ENCODE measurements at regions of chr2 and their contacts with region 1.

Region 1: GRCh38 chr2:88055371-88056128 is at the start of gene KRCC1:
- DNase-seq: peak; percentile 94
- ATAC-seq: peak; percentile 90
- H3K4me3 Mint-ChIP-seq: peak within 1 kb of the TSS; percentile 95
- H3K27ac Mint-ChIP-seq: peak within 1 kb of the TSS; percentile 98
- H3K4me1 Mint-ChIP-seq: peaks cover 66% of the 10 kb centered on the region
- H3K27me3 Mint-ChIP-seq: no peaks in the 10 kb centered on the region
- CTCF ChIP-seq: no peak
- total RNA-seq, gene KRCC1: 10.8 to 11.1 TPM

Region 2: GRCh38 chr2:88016086-88016959 is 39.2 kb before region 1 on chr2 and contains the start of gene RNU2-63P:
- CTCF ChIA-PET with region 1: interaction called, 6 read pairs
- POLR2A ChIA-PET with region 1: interaction called, 21 read pairs
- intact Hi-C with region 1: loop called (anchors 5 kb)
- DNase-seq: peak; percentile 81
- ATAC-seq: peak; percentile 89
- H3K4me3 Mint-ChIP-seq: peak within 1 kb of the TSS; percentile 98
- H3K27ac Mint-ChIP-seq: peak within 1 kb of the TSS; percentile 100
- H3K4me1 Mint-ChIP-seq: peaks cover 16% of the 10 kb centered on the region
- H3K27me3 Mint-ChIP-seq: peaks cover 2% of the 10 kb centered on the region
- CTCF ChIP-seq: no peak
- total RNA-seq, gene RNU2-63P: 6.0 to 7.6 TPM

Region 3: GRCh38 chr2:88074854-88075292 is 19.3 kb after region 1 on chr2:
- CTCF ChIA-PET with region 1: interaction called, 19 read pairs
- POLR2A ChIA-PET with region 1: no interaction called
- intact Hi-C with region 1: no loop called
- DNase-seq: no peak
- ATAC-seq: no peak
- H3K4me3 Mint-ChIP-seq: no peak overlapping the region
- H3K27ac Mint-ChIP-seq: no peak overlapping the region
- H3K4me1 Mint-ChIP-seq: no peaks in the 10 kb centered on the region
- H3K27me3 Mint-ChIP-seq: no peaks in the 10 kb centered on the region
- CTCF ChIP-seq: no peak

Region 4: GRCh38 chr2:88131201-88131998 is 75.8 kb after region 1 on chr2:
- CTCF ChIA-PET with region 1: interaction called, 10 read pairs
- POLR2A ChIA-PET with region 1: no interaction called
- intact Hi-C with region 1: no loop called
- DNase-seq: no peak
- ATAC-seq: no peak
- H3K4me3 Mint-ChIP-seq: no peak overlapping the region
- H3K27ac Mint-ChIP-seq: no peak overlapping the region
- H3K4me1 Mint-ChIP-seq: no peaks in the 10 kb centered on the region
- H3K27me3 Mint-ChIP-seq: peaks cover 6% of the 10 kb centered on the region
- CTCF ChIP-seq: no peak

Region 5: DNA sequence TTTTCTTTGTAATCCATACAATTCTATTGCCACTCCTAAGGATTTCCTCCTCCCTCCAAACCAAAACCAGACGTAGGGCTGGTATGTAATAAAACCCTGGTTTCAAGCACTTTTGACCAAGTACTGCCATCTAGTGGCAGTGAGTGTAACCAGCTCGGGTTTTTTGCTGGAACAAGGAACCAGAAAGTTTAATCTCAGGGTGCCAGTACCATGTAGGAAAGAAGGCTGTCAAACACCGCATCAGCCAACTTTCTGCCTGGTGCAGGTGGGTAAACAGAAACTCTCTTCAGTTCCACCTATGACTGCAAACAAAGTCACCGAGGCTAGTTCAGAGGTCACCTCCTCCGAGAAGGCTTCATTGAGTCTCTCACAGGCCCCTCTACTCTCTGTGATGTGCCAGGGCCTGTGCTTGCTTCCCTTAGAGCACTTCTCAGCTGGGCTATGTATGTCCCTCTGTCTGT is 104.4 kb after region 1 on chr2:
- CTCF ChIA-PET with region 1: interaction called, 193 read pairs
- POLR2A ChIA-PET with region 1: interaction called, 5 read pairs
- intact Hi-C with region 1: loop called (anchors 1 kb)
- DNase-seq: peak; percentile 62
- ATAC-seq: peak; percentile 74
- H3K4me3 Mint-ChIP-seq: no peak overlapping the region
- H3K27ac Mint-ChIP-seq: no peak overlapping the region
- H3K4me1 Mint-ChIP-seq: no peaks in the 10 kb centered on the region
- H3K27me3 Mint-ChIP-seq: no peaks in the 10 kb centered on the region
- CTCF ChIP-seq: peak; percentile 77

Region 6: DNA sequence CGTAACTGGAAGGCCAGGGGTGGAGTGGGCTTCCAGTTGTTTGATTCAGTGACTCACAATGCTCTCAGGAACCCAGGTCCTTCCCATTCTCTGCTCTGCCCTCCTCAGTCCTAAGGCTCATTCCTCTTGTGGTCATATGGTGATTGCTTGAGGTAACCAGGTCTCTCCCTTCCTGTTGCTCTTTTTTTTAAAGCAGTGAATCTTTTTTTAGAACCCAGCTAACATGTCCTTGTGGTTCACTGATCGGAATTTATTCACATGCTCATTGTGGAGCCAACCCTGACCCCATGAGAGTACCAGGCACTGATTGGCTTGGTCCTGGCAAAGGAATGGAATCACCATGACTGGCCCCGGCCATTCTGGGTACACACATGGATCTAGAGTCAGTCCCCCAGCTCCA is 122.0 kb after region 1 on chr2:
- CTCF ChIA-PET with region 1: interaction called, 17 read pairs
- POLR2A ChIA-PET with region 1: no interaction called
- intact Hi-C with region 1: no loop called
- DNase-seq: no peak
- ATAC-seq: no peak
- H3K4me3 Mint-ChIP-seq: no peak overlapping the region
- H3K27ac Mint-ChIP-seq: no peak overlapping the region
- H3K4me1 Mint-ChIP-seq: peaks cover 9% of the 10 kb centered on the region
- H3K27me3 Mint-ChIP-seq: peaks cover 8% of the 10 kb centered on the region
- CTCF ChIP-seq: no peak

Region 7: GRCh38 chr2:88451811-88452565 is 396.4 kb after region 1 on chr2:
- CTCF ChIA-PET with region 1: interaction called, 12 read pairs
- POLR2A ChIA-PET with region 1: no interaction called
- intact Hi-C with region 1: no loop called
- DNase-seq: peak; percentile 21
- ATAC-seq: peak; percentile 48
- H3K4me3 Mint-ChIP-seq: peak overlapping the region; percentile 38
- H3K27ac Mint-ChIP-seq: no peak overlapping the region
- H3K4me1 Mint-ChIP-seq: peaks cover 4% of the 10 kb centered on the region
- H3K27me3 Mint-ChIP-seq: peaks cover 50% of the 10 kb centered on the region
- CTCF ChIP-seq: no peak

Region 8: GRCh38 chr2:88469202-88470114 is 413.9 kb after region 1 on chr2:
- CTCF ChIA-PET with region 1: no interaction called
- POLR2A ChIA-PET with region 1: no interaction called
- intact Hi-C with region 1: no loop called
- DNase-seq: no peak
- ATAC-seq: no peak
- H3K4me3 Mint-ChIP-seq: no peak overlapping the region
- H3K27ac Mint-ChIP-seq: no peak overlapping the region
- H3K4me1 Mint-ChIP-seq: no peaks in the 10 kb centered on the region
- H3K27me3 Mint-ChIP-seq: peaks cover 5% of the 10 kb centered on the region
- CTCF ChIP-seq: no peak

Measured in activated CD8-positive, alpha-beta T cell treated with anti-CD3 and anti-CD28 coated beads for 36 hours (primary cell).